ENCODE measurements at regions of chr18 and their contacts with region 1.

Region 1: DNA sequence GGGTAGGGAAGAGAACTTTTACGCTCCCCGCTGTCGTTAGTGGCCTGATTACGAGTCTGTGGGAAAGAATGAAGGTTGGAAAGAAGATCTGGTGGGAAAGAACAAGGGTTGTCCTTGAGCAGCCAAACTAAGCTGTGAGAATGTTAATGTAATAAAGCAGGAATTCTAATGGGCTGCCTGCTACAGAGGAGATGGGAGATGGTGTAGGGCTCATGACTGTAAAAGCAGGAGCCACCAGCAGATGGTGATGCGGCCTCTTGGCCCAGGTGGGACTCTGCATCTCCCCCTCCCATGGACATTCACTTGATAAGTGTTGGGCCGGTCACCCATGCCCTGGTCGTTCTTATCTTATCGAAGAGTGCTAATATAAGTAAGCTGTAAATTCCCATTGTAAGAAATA is 150.0 kb downstream of the NEDD4L start:
- DNase-seq: no peak
- ATAC-seq: peak; percentile 58

Region 2: DNA sequence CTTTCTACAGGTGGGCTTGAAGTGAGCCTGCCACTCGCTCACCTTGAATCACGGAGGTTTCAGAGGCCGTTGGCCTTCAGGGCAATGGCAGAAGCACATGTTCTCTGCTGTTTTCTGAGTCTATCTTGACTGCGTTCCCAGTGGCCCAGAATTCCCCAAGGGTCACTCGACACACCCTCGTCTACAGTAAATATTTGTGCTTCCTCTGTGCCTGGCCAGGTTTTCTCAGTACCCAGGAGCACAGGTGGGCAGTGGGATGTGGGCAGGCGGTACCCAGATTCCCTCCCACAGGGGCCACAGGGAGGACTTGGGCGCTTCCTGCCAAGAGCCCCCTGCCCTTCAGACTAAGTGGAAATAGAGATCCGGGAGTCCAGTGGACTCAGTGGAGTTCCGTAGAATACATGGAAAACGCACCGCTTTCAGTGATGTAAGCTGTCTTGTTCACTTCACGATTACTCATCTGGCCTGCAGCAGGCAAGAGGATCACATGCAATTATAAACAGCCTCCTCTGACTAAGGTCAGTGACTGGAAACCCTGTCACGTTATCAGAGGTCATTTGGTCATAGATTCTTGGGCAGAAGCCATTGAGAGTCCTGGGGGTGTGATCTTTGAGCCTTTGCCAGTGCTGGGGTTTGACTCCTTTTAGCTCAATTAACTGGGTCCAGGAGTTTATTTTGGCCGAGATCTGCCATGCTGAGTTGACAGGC is 29.8 kb after region 1 on chr18:
- intact Hi-C with region 1: no loop called
- DNase-seq: no peak
- ATAC-seq: peak; percentile 81

Region 3: GRCh38 chr18:58316396-58317342 is 122.6 kb after region 1 on chr18:
- intact Hi-C with region 1: loop called (anchors 5 kb)
- DNase-seq: no peak
- ATAC-seq: no peak

Region 4: GRCh38 chr18:58338961-58339592 is 145.0 kb after region 1 on chr18:
- intact Hi-C with region 1: no loop called
- DNase-seq: no peak
- ATAC-seq: no peak

Measured in Right ventricle myocardium inferior (tissue), 1 donor.